H1 (cell line): ENCODE measurements at regions of chr9 and their contacts with region 1.

Region 1: GRCh38 chr9:124861342-124862229 is at the starts of genes ARPC5L and RPL35:
- DNase-seq: peak in 1 of 2 experiments; percentile 94
- H3K4me3 ChIP-seq: peak within 1 kb of the TSS; percentile 86 to 97 (median 96)
- H3K27ac ChIP-seq: peak within 1 kb of the TSS; percentile 89
- H3K4me1 ChIP-seq: peaks cover 0 to 10% (median 8%) of the 10 kb centered on the region in 4 experiments; a peak in 5 of 7 replicates
- H3K27me3 ChIP-seq: no peaks in the 10 kb centered on the region
- CTCF ChIP-seq: peak in 1 of 3 experiments; percentile 36; a peak in 1 of 4 replicates
- EP300 ChIP-seq: peak in 1 of 2 experiments; percentile 99; a peak in 2 of 3 replicates
- POLR2A ChIP-seq: peak in 1 of 2 experiments; percentile 97; a peak in 2 of 3 replicates
- RAD21 ChIP-seq: no peak
- total RNA-seq, gene ARPC5L: 50.5 and 50.6 TPM in 2 replicates
- total RNA-seq, gene RPL35: 1,831 and 1,889 TPM in 2 replicates

Region 2: GRCh38 chr9:124782661-124783574 is 78.7 kb before region 1 on chr9:
- CTCF ChIA-PET with region 1: interaction called, 1,529 read pairs
- POLR2A ChIA-PET with region 1: interaction called, 396 read pairs
- DNase-seq: peak in 1 of 2 experiments; percentile 48
- H3K4me3 ChIP-seq: no peak overlapping the region
- H3K27ac ChIP-seq: no peak overlapping the region
- H3K4me1 ChIP-seq: peaks cover 8 to 16% (median 13%) of the 10 kb centered on the region in 4 experiments
- H3K27me3 ChIP-seq: no peaks in the 10 kb centered on the region; a peak in 1 of 7 replicates
- CTCF ChIP-seq: no peak
- EP300 ChIP-seq: no peak
- POLR2A ChIP-seq: no peak
- RAD21 ChIP-seq: no peak; a peak in 1 of 4 replicates

Region 3: GRCh38 chr9:124812401-124813016 is 49.1 kb before region 1 on chr9:
- CTCF ChIA-PET with region 1: interaction called, 1,529 read pairs
- POLR2A ChIA-PET with region 1: interaction called, 23 read pairs
- DNase-seq: peak in 1 of 2 experiments; percentile 64
- H3K4me3 ChIP-seq: no peak overlapping the region
- H3K27ac ChIP-seq: no peak overlapping the region
- H3K4me1 ChIP-seq: peaks cover 10 to 24% (median 16%) of the 10 kb centered on the region in 4 experiments
- H3K27me3 ChIP-seq: no peaks in the 10 kb centered on the region
- CTCF ChIP-seq: no peak
- EP300 ChIP-seq: no peak
- POLR2A ChIP-seq: no peak
- RAD21 ChIP-seq: no peak

Region 4: GRCh38 chr9:124831642-124832364 is 29.8 kb before region 1 on chr9:
- CTCF ChIA-PET with region 1: interaction called, 1,529 read pairs
- POLR2A ChIA-PET with region 1: interaction called, 29 read pairs
- DNase-seq: no peak
- H3K4me3 ChIP-seq: no peak overlapping the region
- H3K27ac ChIP-seq: no peak overlapping the region
- H3K4me1 ChIP-seq: peaks cover 0 to 3% (median 1%) of the 10 kb centered on the region in 4 experiments; a peak in 3 of 7 replicates
- H3K27me3 ChIP-seq: no peaks in the 10 kb centered on the region
- CTCF ChIP-seq: no peak
- EP300 ChIP-seq: no peak
- POLR2A ChIP-seq: no peak
- RAD21 ChIP-seq: no peak

Region 5: GRCh38 chr9:124839612-124840299 is 21.8 kb before region 1 on chr9:
- CTCF ChIA-PET with region 1: interaction called, 1,529 read pairs
- POLR2A ChIA-PET with region 1: interaction called, 29 read pairs
- DNase-seq: peak in 1 of 2 experiments; percentile 84
- H3K4me3 ChIP-seq: no peak overlapping the region
- H3K27ac ChIP-seq: 0 out of 2 replicates have a peak overlapping the region, but pooled peaks have one; percentile 5
- H3K4me1 ChIP-seq: peaks cover 0 to 14% (median 3%) of the 10 kb centered on the region in 4 experiments; a peak in 4 of 7 replicates
- H3K27me3 ChIP-seq: no peaks in the 10 kb centered on the region
- CTCF ChIP-seq: peak; percentile 71 to 89 (median 78)
- EP300 ChIP-seq: no peak
- POLR2A ChIP-seq: no peak
- RAD21 ChIP-seq: peak; percentile 50 to 61

Region 6: DNA sequence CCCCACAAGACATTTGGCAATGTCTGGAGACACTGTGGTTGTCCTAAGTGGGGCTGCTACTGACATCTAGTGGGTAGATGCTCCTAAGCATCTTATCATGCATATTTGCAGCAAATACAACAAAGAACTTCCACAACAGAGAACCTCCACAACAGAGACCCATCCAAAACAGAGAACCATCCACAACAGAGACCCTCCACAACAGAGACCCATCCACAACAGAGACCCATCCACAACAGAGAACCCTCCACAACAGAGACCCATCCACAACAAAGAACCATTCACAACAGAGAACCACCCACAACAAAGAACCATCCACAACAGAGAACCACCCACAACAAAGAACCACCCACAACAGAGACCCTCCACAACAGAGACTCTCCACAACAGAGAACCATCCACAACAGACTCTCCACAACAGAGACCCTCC is 33.2 kb after region 1 on chr9:
- CTCF ChIA-PET with region 1: interaction called, 29 read pairs
- POLR2A ChIA-PET with region 1: interaction called, 573 read pairs
- DNase-seq: no peak
- H3K4me3 ChIP-seq: no peak overlapping the region
- H3K27ac ChIP-seq: no peak overlapping the region
- H3K4me1 ChIP-seq: no peaks in the 10 kb centered on the region
- H3K27me3 ChIP-seq: no peaks in the 10 kb centered on the region
- CTCF ChIP-seq: peak in 2 of 3 experiments; percentile 60 to 67; a peak in 3 of 4 replicates
- EP300 ChIP-seq: no peak
- POLR2A ChIP-seq: no peak
- RAD21 ChIP-seq: peak; percentile 69 to 85